Ascending aorta (tissue), 2 donors: ENCODE measurements at regions of chr2 and their contacts with region 1.

Region 1: GRCh38 chr2:212147921-212148513 is 390.6 kb downstream of the ERBB4 start:
- DNase-seq: no peak
- H3K4me3 ChIP-seq: no peak overlapping the region
- H3K27ac ChIP-seq: no peak overlapping the region
- H3K4me1 ChIP-seq: peaks cover 5 to 7% of the 10 kb centered on the region in 2 donors
- H3K27me3 ChIP-seq: no peaks in the 10 kb centered on the region
- CTCF ChIP-seq: peak; percentile 23 to 55 (median 36)

Region 2: DNA sequence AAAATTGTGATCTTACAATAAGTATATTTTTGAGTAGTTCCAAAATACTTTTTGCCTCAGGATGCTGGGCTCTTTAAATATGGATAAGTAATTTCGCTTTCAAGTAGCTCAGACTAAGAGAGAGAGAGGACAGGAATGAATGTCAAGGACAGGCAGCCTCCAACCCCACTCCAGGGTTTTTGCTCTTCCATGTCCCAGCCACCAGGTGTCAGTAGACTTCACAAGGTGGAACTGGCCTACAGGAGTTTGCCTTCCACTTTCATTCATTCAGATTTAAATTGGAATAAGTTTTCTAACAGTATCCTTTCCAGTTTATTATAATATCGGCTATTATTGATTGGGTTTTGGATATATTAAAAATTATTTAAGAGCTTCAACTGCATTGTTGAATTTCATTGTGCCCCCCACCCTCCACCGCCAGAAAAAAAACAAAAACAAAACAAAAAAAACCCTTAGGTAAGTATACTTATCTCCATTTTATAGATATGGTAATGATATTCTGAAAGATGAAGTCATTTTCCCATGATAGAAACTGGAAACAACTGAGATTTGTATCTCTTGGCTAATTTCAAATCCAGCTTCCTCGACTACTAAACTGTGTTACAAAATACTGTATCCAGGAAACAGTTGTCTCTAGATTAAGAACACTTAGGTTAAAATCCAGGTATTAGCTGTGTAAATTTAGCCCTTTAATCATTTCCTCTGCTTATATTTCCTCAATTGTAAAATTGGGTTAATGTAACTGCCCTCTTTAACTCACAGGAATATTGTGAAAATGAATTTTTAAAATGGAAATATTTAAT is 402.5 kb before region 1 on chr2:
- intact Hi-C with region 1: loop called (anchors 10 kb)
- DNase-seq: no peak
- H3K4me3 ChIP-seq: no peak overlapping the region
- H3K27ac ChIP-seq: no peak overlapping the region
- H3K4me1 ChIP-seq: no peaks in the 10 kb centered on the region
- H3K27me3 ChIP-seq: no peaks in the 10 kb centered on the region
- CTCF ChIP-seq: peak; percentile 45 to 88 (median 88)

Region 3: GRCh38 chr2:212359425-212360067 is 211.5 kb after region 1 on chr2:
- intact Hi-C with region 1: loop called (anchors 10 kb)
- DNase-seq: no peak
- H3K4me3 ChIP-seq: no peak overlapping the region
- H3K27ac ChIP-seq: peak overlapping the region; percentile 18 to 57
- H3K4me1 ChIP-seq: peaks cover 5 to 8% of the 10 kb centered on the region in 2 donors
- H3K27me3 ChIP-seq: no peaks in the 10 kb centered on the region
- CTCF ChIP-seq: no peak